AG04449 (cell line): ENCODE measurements at regions of chr22 and their contacts with region 1.

Region 1: DNA sequence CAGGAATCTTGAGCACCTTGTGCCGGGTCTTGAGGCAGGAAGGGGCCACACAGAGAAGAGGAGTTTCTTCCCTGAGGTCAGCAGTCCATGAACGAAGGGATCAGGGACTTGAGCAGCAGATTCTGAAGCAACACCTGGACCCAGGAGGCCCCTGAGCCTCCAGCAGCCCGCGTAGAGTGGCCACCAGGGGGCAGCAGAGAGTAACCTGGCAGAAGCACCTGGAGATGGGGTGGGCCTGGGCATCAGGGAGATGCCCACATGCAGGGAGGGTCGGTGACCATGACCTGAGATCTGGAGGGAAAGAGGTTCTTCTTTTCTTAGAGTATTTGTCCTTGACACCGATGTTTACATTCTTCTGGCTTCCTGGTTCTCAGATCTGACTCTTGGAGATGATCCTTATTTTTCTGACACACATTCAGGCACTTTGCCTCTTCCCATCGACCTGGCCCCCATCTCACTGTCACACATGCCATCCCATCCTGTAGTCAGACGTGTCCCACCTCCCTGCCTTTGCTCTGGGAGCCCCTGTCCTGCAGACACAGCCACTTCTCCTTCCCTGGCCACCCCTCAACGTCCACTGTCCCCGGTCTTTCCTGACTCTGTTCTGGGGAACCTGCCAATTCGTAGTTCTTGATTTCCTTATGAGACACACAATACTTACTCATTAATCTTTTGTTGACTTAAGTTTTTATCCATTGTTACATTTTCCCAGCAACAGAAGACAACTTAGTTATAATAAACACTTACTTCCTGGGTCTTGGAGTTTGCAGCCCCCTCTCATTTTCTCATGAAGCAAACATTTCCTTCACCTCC is 66.5 kb downstream of the GGTLC2 start:
- DNase-seq: no peak
- H3K4me3 ChIP-seq: no peak overlapping the region
- CTCF ChIP-seq: peak; percentile 85

Region 2: GRCh38 chr22:22745225-22746060 is 34.5 kb after region 1 on chr22:
- CTCF ChIA-PET with region 1: interaction called, 16 read pairs
- POLR2A ChIA-PET with region 1: no interaction called
- DNase-seq: no peak
- H3K4me3 ChIP-seq: no peak overlapping the region
- CTCF ChIP-seq: peak; percentile 67

Region 3: DNA sequence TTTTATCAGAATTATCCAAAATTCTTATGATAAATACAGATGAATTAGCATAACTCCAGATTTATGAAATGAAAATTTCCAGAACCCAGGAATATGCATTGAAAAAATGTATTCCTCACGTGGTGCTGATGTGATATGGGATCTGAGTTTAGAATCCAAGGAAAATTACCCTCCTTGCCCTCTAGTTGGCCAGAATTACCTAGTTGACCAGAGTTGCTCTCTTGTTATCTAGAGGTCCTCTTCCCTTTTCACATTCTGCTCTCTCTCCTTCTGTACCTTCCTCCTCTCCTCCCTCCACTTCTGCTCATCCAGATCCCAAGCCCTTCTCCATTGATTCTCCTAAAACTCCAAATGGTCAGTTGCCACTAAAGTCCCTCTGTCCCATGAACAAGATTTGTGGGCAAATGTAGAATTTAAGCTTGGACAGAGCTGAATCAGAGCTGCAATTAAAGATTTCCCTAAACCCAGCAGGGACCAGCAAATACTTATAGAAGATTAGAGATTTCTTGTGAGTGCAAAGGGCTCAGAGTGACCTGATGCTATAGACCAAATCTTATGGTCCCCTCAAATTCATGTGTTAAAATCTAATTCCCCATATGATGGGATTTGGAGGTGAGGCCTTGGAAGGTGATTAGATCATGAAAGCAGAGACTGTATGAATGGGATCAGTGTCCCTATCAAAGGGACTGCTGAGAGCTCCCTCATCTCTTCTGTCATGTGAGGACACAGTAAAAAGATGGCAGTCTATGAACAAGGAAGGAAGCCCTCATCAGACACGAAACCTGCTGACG is 73.5 kb after region 1 on chr22:
- CTCF ChIA-PET with region 1: no interaction called
- POLR2A ChIA-PET with region 1: no interaction called
- DNase-seq: no peak
- H3K4me3 ChIP-seq: no peak overlapping the region
- CTCF ChIP-seq: no peak

Region 4: DNA sequence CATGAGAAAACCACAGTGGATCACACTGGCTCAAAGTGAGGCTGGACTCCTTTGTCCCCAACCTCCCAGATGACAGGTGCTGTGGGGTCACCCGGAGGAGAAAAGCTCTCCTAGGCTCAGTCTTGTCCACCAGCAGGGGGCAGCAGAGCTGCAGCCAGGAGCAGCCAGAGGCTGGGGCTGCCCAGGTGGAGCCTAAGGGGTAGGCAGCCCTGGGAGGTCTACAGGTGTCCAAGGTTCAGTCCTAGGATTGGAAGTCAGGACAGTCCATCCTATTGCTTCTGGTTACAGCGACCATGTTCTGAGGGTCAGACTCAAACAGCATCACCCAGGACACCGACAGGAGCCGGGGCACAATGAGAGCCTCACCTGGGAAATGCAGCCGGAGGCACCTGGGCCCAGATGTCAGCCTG is 99.1 kb after region 1 on chr22:
- CTCF ChIA-PET with region 1: no interaction called
- POLR2A ChIA-PET with region 1: no interaction called
- DNase-seq: no peak
- H3K4me3 ChIP-seq: no peak overlapping the region
- CTCF ChIP-seq: peak; percentile 81